Body of pancreas (tissue), 4 donors: ENCODE measurements at regions of chr3 and their contacts with region 1.

Region 1: GRCh38 chr3:16600780-16601539 is 4.3 kb downstream of the DAZL start:
- DNase-seq: peak; percentile 86 to 90 (median 86)
- ATAC-seq: peak; percentile 60
- H3K4me3 ChIP-seq: no peak overlapping the region
- H3K27ac ChIP-seq: no peak overlapping the region
- H3K4me1 ChIP-seq: no peaks in the 10 kb centered on the region
- H3K27me3 ChIP-seq: no peaks in the 10 kb centered on the region
- CTCF ChIP-seq: peak; percentile 66 to 94 (median 84)
- POLR2A ChIP-seq: no peak

Region 2: GRCh38 chr3:17233398-17233800 is 632.4 kb after region 1 on chr3:
- intact Hi-C with region 1: loop called (anchors 10 kb)
- DNase-seq: peak in 2 of 4 donors; percentile 11 to 30
- ATAC-seq: peak; percentile 80
- H3K4me3 ChIP-seq: no peak overlapping the region
- H3K27ac ChIP-seq: no peak overlapping the region
- H3K4me1 ChIP-seq: peaks cover 20% of the 10 kb centered on the region
- H3K27me3 ChIP-seq: no peaks in the 10 kb centered on the region
- CTCF ChIP-seq: peak; percentile 31 to 82 (median 67)
- POLR2A ChIP-seq: no peak